ENCODE measurements at regions of chr16 and their contacts with region 1.

Region 1: GRCh38 chr16:2838928-2839327 is 8.8 kb downstream of the ZG16B start:
- DNase-seq: peak; percentile 75 to 80 (median 77)
- ATAC-seq: peak; percentile 92
- H3K4me3 ChIP-seq: no peak overlapping the region
- H3K27ac ChIP-seq: no peak overlapping the region
- H3K4me1 ChIP-seq: peaks cover 3 to 41% of the 10 kb centered on the region in 2 experiments; a peak in 4 of 5 replicates
- H3K27me3 ChIP-seq: peaks cover 4 to 22% of the 10 kb centered on the region in 2 experiments; a peak in 2 of 5 replicates
- CTCF ChIP-seq: peak; percentile 88 to 95 (median 94)
- EP300 ChIP-seq: no peak
- POLR2A ChIP-seq: no peak
- RAD21 ChIP-seq: peak; percentile 89 to 95

Region 2: DNA sequence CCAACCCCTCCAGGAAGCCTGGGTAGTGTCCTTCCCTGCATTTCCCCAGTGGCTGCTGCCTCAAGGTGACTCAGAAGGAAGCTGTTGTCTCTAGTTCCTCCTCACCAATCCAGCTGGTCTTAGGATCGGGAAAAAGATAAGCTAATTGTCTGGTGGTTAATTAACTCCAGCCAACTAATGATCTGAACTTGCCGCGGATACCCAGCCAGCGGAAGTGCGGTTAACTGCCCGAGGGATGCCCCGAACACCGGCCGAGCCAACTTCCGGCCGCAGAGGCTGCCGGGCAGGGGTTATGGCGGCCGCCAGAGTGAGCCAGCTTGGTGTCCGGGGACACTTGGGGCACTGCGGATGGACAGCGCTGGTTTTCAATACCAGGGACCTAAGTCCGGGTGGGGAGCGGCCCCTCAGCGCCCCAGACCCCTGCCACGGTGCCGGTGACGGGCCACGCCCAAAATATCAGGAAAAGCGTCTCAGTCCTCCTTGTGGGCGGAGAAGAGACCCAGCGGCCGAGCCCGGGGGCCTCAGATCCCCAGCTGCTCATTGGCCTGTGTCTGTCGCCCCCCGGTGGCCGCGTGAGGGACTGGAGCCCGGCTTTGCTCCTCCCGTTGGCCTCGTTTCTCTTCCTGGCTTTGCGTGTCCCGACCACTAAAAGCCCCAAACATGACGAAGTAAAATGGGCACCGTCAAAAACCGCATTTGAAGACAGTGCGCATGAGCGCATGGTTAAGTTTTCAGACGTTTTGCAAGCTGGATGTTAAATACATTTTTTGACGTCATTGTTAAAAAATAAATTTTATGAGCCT is 29.3 kb after region 1 on chr16:
- CTCF ChIA-PET with region 1: interaction called, 23 read pairs
- POLR2A ChIA-PET with region 1: interaction called, 6 read pairs
- in situ Hi-C with region 1: loop called (anchors 5 kb)
- intact Hi-C with region 1: loop called (anchors 1 kb)
- DNase-seq: peak; percentile 96
- ATAC-seq: peak; percentile 99
- H3K4me3 ChIP-seq: peak overlapping the region; percentile 52
- H3K27ac ChIP-seq: peak overlapping the region; percentile 87
- H3K4me1 ChIP-seq: peaks cover 4 to 8% of the 10 kb centered on the region in 2 experiments; a peak in 3 of 5 replicates
- H3K27me3 ChIP-seq: peaks cover 3 to 10% of the 10 kb centered on the region in 2 experiments; a peak in 2 of 5 replicates
- CTCF ChIP-seq: peak; percentile 96 to 98 (median 96)
- EP300 ChIP-seq: no peak; the same call in 1 of the 2 replicates
- POLR2A ChIP-seq: peak; percentile 94
- RAD21 ChIP-seq: peak; percentile 97 to 98

Region 3: GRCh38 chr16:2883027-2883851 is 44.3 kb after region 1 on chr16 and contains the start of gene FLYWCH2:
- CTCF ChIA-PET with region 1: no interaction called
- POLR2A ChIA-PET with region 1: no interaction called
- in situ Hi-C with region 1: no loop called
- intact Hi-C with region 1: no loop called
- DNase-seq: peak; percentile 94 to 97 (median 96)
- ATAC-seq: peak; percentile 93
- H3K4me3 ChIP-seq: peak within 1 kb of the TSS; percentile 60
- H3K27ac ChIP-seq: peak within 1 kb of the TSS; percentile 77
- H3K4me1 ChIP-seq: peaks cover 0 to 26% of the 10 kb centered on the region in 2 experiments; a peak in 3 of 5 replicates
- H3K27me3 ChIP-seq: no peaks in the 10 kb centered on the region
- CTCF ChIP-seq: no peak
- EP300 ChIP-seq: no peak
- POLR2A ChIP-seq: peak; percentile 84
- RAD21 ChIP-seq: no peak
- polyA plus RNA-seq, gene FLYWCH2: 0.70 to 1.4 TPM

Region 4: DNA sequence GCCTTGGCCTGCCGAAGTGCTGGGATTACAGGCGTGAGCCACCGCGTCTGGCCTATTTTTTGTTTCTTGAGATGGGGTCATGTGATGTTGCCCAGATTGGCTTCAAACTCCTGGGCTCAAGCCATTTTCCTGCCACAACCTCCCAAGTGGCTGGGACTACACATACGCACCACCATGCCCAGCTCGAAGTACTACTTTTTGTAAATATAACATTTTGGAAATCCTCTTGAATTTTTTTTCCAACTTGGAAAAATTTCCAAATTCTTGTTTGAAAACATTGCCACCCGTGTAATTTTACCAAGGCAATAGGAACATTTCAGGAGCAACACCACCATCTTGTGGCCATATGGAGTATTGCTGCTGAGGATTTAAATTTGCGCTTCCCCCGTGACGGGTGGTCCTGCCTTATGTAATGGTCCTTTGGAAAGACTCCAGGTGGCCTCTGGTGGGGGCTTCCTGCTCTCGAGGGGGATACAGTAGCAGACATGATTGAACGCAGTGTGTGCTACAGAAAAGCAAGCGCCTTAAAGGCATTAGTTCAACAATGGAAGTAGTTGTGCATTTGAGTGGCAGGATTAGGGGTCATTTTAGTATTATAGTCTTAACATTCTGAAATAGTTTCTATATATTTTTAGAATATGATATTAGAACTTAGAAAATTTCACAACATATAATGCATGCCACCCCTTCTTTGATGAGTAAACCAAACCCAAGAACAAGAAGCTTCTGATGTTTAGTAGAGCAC is 80.8 kb after region 1 on chr16:
- CTCF ChIA-PET with region 1: interaction called, 23 read pairs
- POLR2A ChIA-PET with region 1: interaction called, 5 read pairs
- in situ Hi-C with region 1: no loop called
- intact Hi-C with region 1: loop called (anchors 5 kb)
- DNase-seq: peak; percentile 58 to 76 (median 62)
- ATAC-seq: peak; percentile 70
- H3K4me3 ChIP-seq: no peak overlapping the region
- H3K27ac ChIP-seq: no peak overlapping the region
- H3K4me1 ChIP-seq: peaks cover 9 to 11% of the 10 kb centered on the region in 2 experiments
- H3K27me3 ChIP-seq: no peaks in the 10 kb centered on the region
- CTCF ChIP-seq: peak; percentile 78 to 87 (median 86)
- EP300 ChIP-seq: no peak
- POLR2A ChIP-seq: no peak
- RAD21 ChIP-seq: peak; percentile 76 to 79

Region 5: DNA sequence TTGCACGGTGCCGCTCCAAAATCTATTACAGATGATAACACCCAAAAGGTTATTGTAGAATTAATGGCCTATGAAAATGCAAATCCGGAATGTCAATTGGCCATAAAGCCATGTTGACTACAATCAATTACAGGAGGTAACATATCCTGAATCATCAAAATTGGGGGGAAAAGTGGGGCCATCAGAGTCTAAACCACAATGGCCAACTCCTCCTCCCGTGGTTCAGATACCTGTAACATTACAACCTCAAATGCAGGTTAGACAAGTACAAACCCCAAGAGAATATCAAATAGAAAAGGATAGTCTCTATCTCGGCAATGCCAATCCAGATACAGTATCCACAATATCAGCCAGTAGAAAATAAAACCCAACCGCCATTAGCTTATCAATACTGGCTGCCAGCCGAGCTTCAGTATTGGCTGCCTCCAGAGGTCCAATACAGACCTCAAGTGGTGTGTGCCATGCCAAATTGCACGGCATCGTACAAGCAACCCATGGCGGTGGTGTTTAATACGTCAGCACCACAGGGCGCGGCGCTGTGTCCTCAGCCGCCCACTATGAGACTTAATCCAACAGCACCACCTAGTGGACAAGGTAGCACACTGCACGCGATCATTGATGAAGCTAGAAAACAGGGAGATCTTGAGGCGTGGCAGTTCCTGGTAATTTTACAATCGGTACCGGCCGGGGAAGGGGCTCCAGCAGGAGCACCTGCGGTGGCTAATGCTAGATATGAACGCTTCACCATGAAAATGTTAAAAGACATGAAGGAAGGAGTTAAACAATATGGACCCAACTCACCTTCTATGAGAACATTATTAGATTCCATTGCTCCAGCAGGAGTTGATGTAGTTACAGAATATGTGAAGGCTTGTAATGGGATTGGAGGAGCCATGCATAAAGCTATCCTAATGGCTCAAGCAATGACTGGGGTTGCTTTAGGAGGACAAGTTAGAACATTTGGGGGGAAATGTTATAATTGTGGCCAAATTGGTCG is 88.0 kb after region 1 on chr16:
- CTCF ChIA-PET with region 1: interaction called, 12 read pairs
- POLR2A ChIA-PET with region 1: interaction called, 5 read pairs
- in situ Hi-C with region 1: loop called (anchors 5 kb)
- intact Hi-C with region 1: no loop called
- DNase-seq: peak; percentile 75 to 93 (median 78)
- ATAC-seq: peak; percentile 98
- H3K4me3 ChIP-seq: no peak overlapping the region
- H3K27ac ChIP-seq: no peak overlapping the region
- H3K4me1 ChIP-seq: peaks cover 3 to 22% of the 10 kb centered on the region in 2 experiments; a peak in 3 of 5 replicates
- H3K27me3 ChIP-seq: no peaks in the 10 kb centered on the region
- CTCF ChIP-seq: peak; percentile 96 to 99 (median 97)
- EP300 ChIP-seq: no peak
- POLR2A ChIP-seq: no peak
- RAD21 ChIP-seq: peak; percentile 64 to 78

Measured in K562 (cell line).